IMR-90 (cell line): ENCODE measurements at regions of chr3 and their contacts with region 1.

Region 1: GRCh38 chr3:46261926-46262594 is 19.8 kb downstream of the CCR3 start:
- DNase-seq: peak; percentile 4
- ATAC-seq: no peak; the same call in 1 of the 2 replicates
- H3K4me3 ChIP-seq: no peak overlapping the region
- H3K27ac ChIP-seq: no peak overlapping the region
- H3K4me1 ChIP-seq: no peaks in the 10 kb centered on the region
- H3K27me3 ChIP-seq: peaks cover 9% of the 10 kb centered on the region
- CTCF ChIP-seq: no peak
- POLR2A ChIP-seq: no peak
- RAD21 ChIP-seq: no peak

Region 2: GRCh38 chr3:45929042-45929679 is 332.9 kb before region 1 on chr3:
- CTCF ChIA-PET with region 1: no interaction called
- POLR2A ChIA-PET with region 1: interaction called, 10 read pairs
- dilution Hi-C with region 1: no loop called
- in situ Hi-C with region 1: no loop called
- intact Hi-C with region 1: no loop called
- DNase-seq: peak; percentile 26
- ATAC-seq: peak; percentile 93
- H3K4me3 ChIP-seq: no peak overlapping the region
- H3K27ac ChIP-seq: no peak overlapping the region
- H3K4me1 ChIP-seq: peaks cover 8% of the 10 kb centered on the region
- H3K27me3 ChIP-seq: no peaks in the 10 kb centered on the region
- CTCF ChIP-seq: peak; percentile 79
- POLR2A ChIP-seq: no peak
- RAD21 ChIP-seq: peak; percentile 93

Region 3: DNA sequence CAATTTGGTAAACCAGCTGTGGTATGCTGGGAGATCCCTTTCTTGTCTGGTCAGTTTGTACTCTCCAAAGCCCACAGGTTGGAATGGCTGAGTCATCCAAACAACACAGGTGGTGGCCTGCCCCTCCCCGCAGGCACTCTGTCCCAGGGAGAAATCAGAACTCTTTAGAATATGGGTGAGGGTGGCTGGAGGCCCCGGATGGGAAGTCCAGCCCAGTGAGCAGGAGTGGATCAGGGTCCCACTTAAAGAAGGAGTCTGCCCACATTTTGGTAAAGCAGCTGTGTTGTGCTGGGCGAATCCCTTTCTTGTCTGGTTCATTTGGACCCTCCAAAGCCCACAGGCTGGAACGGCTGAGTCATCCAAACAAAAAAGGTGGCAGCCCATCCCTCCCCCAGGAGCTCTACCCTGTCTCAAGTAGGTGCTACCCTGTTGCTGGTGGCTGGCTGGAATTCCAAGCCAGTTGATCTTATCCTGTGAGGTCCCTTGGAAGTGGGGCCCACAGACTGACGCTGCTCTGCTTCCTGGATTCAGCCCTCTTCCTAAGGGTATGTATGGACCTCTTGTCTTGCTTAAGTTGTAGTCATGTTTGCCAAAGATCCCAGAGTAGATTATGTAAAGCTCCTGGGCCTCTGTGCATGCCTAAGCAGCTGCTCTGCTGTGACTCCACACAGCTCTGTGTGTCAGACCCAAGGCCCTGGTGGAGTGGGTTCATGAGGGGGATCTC is 98.6 kb before region 1 on chr3:
- CTCF ChIA-PET with region 1: no interaction called
- POLR2A ChIA-PET with region 1: no interaction called
- dilution Hi-C with region 1: no loop called
- in situ Hi-C with region 1: no loop called
- intact Hi-C with region 1: no loop called
- DNase-seq: no peak
- ATAC-seq: peak; percentile 32
- H3K4me3 ChIP-seq: no peak overlapping the region
- H3K27ac ChIP-seq: no peak overlapping the region
- H3K4me1 ChIP-seq: no peaks in the 10 kb centered on the region
- H3K27me3 ChIP-seq: peaks cover 5% of the 10 kb centered on the region
- CTCF ChIP-seq: no peak
- POLR2A ChIP-seq: no peak
- RAD21 ChIP-seq: no peak

Region 4: GRCh38 chr3:46194868-46195553 is 67.0 kb before region 1 on chr3:
- CTCF ChIA-PET with region 1: no interaction called
- POLR2A ChIA-PET with region 1: no interaction called
- dilution Hi-C with region 1: no loop called
- in situ Hi-C with region 1: no loop called
- intact Hi-C with region 1: no loop called
- DNase-seq: no peak
- ATAC-seq: no peak
- H3K4me3 ChIP-seq: no peak overlapping the region
- H3K27ac ChIP-seq: no peak overlapping the region
- H3K4me1 ChIP-seq: no peaks in the 10 kb centered on the region
- H3K27me3 ChIP-seq: peaks cover 14% of the 10 kb centered on the region
- CTCF ChIP-seq: no peak
- POLR2A ChIP-seq: no peak
- RAD21 ChIP-seq: no peak

Region 5: GRCh38 chr3:46284981-46285683 is 23.1 kb after region 1 on chr3:
- CTCF ChIA-PET with region 1: no interaction called
- POLR2A ChIA-PET with region 1: no interaction called
- dilution Hi-C with region 1: no loop called
- in situ Hi-C with region 1: no loop called
- intact Hi-C with region 1: no loop called
- DNase-seq: no peak
- ATAC-seq: no peak
- H3K4me3 ChIP-seq: no peak overlapping the region
- H3K27ac ChIP-seq: no peak overlapping the region
- H3K4me1 ChIP-seq: no peaks in the 10 kb centered on the region
- H3K27me3 ChIP-seq: peaks cover 8% of the 10 kb centered on the region
- CTCF ChIP-seq: no peak
- POLR2A ChIP-seq: no peak
- RAD21 ChIP-seq: no peak